Naive thymus-derived CD4-positive, alpha-beta T cell (primary cell): ENCODE measurements at regions of chr7 and their contacts with region 1.

Region 1: GRCh38 chr7:152463709-152464311 is 28.0 kb upstream of the KMT2C start:
- DNase-seq: peak; percentile 99 to 100 (median 100)
- ATAC-seq: peak; percentile 96
- H3K4me3 ChIP-seq: peak overlapping the region; percentile 82
- H3K4me3 Mint-ChIP-seq: peak overlapping the region; percentile 64 to 96 (median 92)
- H3K27ac ChIP-seq: peak overlapping the region; percentile 99
- H3K27ac Mint-ChIP-seq: peak overlapping the region in 7 of 9 donors; percentile 62 to 93 (median 88)
- H3K4me1 ChIP-seq: peaks cover 5% of the 10 kb centered on the region in 2 donors
- H3K4me1 Mint-ChIP-seq: peaks cover 5 to 17% (median 7%) of the 10 kb centered on the region in 7 donors
- H3K27me3 ChIP-seq: no peaks in the 10 kb centered on the region
- H3K27me3 Mint-ChIP-seq: no peaks in the 10 kb centered on the region

Region 2: GRCh38 chr7:151987748-151988529 is 475.9 kb before region 1 on chr7:
- CTCF ChIA-PET with region 1: no interaction called
- POLR2A ChIA-PET with region 1: no interaction called
- intact Hi-C with region 1: no loop called
- DNase-seq: no peak
- ATAC-seq: no peak
- H3K4me3 ChIP-seq: no peak overlapping the region
- H3K4me3 Mint-ChIP-seq: no peak overlapping the region
- H3K27ac ChIP-seq: no peak overlapping the region
- H3K27ac Mint-ChIP-seq: no peak overlapping the region
- H3K4me1 ChIP-seq: no peaks in the 10 kb centered on the region
- H3K4me1 Mint-ChIP-seq: peaks cover 0 to 10% (median 7%) of the 10 kb centered on the region in 7 donors
- H3K27me3 ChIP-seq: no peaks in the 10 kb centered on the region
- H3K27me3 Mint-ChIP-seq: peaks cover 7 to 32% (median 18%) of the 10 kb centered on the region in 5 donors

Region 3: GRCh38 chr7:152512706-152513105 is 48.9 kb after region 1 on chr7:
- CTCF ChIA-PET with region 1: interaction called, 5 read pairs
- POLR2A ChIA-PET with region 1: interaction called, 3 read pairs
- intact Hi-C with region 1: loop called (anchors 1 to 2 kb)
- DNase-seq: peak in 7 of 9 donors; percentile 19 to 54 (median 31)
- ATAC-seq: peak; percentile 79
- H3K4me3 ChIP-seq: peak overlapping the region; percentile 39
- H3K4me3 Mint-ChIP-seq: peak overlapping the region; percentile 58 to 87 (median 78)
- H3K27ac ChIP-seq: peak overlapping the region; percentile 2
- H3K27ac Mint-ChIP-seq: peak overlapping the region in 7 of 9 donors; percentile 15 to 77 (median 51)
- H3K4me1 ChIP-seq: peaks cover 0 to 4% of the 10 kb centered on the region in 2 donors
- H3K4me1 Mint-ChIP-seq: peaks cover 4 to 20% (median 13%) of the 10 kb centered on the region in 7 donors
- H3K27me3 ChIP-seq: no peaks in the 10 kb centered on the region
- H3K27me3 Mint-ChIP-seq: peaks cover 0 to 4% (median 0%) of the 10 kb centered on the region in 5 donors

Region 4: DNA sequence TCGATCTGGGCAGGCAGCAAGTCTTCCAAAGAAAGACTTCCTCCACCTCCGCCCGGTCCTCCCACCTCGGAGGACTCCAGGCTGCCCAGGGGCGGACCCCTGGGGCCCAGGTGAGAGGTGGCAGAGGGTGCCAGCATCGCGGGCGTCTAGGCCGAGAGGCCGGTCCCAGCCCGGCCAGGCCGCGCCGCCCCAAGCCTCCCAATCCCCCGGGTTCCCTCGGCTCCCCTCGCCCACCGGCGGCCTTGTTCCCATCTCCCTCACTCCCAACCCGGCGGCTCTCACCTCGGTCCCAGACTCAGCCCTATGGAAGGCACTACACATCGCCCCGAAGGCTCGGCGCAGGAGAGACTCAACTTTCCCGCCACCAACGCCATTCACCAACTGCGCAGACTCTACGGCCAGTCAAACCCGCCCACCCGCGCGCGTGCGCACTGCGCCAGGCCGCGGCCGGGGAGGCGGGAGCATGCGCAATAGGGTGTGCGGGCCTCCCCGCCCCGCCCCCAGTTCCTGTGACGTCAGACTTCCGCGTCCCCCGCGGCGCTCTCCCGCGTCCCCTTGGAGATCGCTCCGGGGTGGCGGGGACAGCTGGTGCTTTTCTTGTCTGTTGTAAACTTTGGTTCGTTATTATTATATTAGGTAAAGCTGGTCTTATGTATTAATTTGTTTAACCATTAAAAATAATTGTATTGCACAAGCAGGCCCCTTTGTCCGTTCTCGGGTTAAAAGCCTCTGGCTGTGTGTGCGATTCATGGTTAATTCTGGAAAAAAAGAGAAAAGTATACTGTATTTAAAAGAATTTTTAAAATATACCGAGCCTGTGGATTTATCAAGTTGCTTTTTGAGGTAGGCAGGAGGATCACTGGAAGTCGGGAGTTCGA is 212.2 kb after region 1 on chr7 and contains the start of gene XRCC2:
- CTCF ChIA-PET with region 1: no interaction called
- POLR2A ChIA-PET with region 1: interaction called, 6 read pairs
- intact Hi-C with region 1: loop called (anchors 1 kb)
- DNase-seq: peak; percentile 85 to 100 (median 97)
- ATAC-seq: peak; percentile 95
- H3K4me3 ChIP-seq: peak within 1 kb of the TSS; percentile 91
- H3K4me3 Mint-ChIP-seq: peak within 1 kb of the TSS; percentile 88 to 99 (median 94)
- H3K27ac ChIP-seq: peak within 1 kb of the TSS; percentile 87
- H3K27ac Mint-ChIP-seq: peak within 1 kb of the TSS; percentile 75 to 98 (median 91)
- H3K4me1 ChIP-seq: peaks cover 5 to 8% of the 10 kb centered on the region in 2 donors
- H3K4me1 Mint-ChIP-seq: peaks cover 9 to 22% (median 12%) of the 10 kb centered on the region in 7 donors
- H3K27me3 ChIP-seq: no peaks in the 10 kb centered on the region
- H3K27me3 Mint-ChIP-seq: no peaks in the 10 kb centered on the region
- total RNA-seq, gene XRCC2: 0.48 to 13.8 (median 1.2) TPM

Region 5: DNA sequence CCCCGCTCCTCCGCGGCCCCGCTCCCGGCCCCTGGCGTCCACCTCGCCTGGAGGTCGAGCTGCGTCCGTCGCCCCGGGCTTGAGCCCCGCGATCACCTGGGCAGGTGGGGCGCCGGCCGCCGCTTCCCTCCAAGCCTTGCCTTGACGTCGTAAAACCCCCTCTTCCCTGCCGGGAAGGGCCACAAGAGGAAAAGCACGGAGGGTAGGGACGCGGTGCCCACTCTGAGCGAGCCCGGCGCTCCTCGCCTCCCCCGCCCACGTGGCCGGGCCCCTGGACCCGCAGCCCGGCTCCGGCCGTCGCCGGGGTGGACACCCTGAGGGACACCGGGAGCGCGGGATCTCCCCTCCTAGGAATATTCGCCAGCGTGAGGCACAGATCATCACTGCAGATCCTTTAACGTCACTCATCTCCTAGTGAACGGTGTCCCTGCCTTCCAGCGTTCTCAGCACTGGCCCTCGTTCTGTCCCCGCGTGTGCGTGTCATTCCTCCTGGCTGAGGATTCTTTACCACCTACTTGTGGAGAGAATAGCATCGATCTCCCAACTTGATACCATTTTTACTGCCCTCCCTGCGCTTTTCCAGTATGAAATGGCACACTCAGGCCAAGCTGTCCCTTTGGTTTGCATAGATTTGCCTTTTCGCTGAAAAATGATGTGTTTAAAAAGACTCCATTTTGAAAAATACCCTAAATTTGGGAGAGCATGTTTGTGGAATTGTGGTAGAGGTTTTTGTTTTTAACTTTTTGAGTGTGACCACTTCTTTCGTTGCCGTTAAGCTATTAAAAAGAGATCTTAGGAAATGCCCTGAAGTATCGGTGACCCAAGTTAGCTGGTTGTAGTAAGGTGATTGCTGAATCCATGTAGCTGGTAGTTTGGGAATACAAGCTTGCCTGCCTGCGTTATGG is 296.4 kb after region 1 on chr7:
- CTCF ChIA-PET with region 1: no interaction called
- POLR2A ChIA-PET with region 1: no interaction called
- intact Hi-C with region 1: loop called (anchors 1 to 2 kb)
- DNase-seq: peak in 5 of 9 donors; percentile 12 to 53 (median 22)
- ATAC-seq: peak; percentile 26
- H3K4me3 ChIP-seq: peak overlapping the region; percentile 68
- H3K4me3 Mint-ChIP-seq: peak overlapping the region; percentile 85 to 94 (median 90)
- H3K27ac ChIP-seq: peak overlapping the region; percentile 93
- H3K27ac Mint-ChIP-seq: peak overlapping the region; percentile 63 to 97 (median 88)
- H3K4me1 ChIP-seq: peaks cover 6 to 11% of the 10 kb centered on the region in 2 donors
- H3K4me1 Mint-ChIP-seq: peaks cover 9 to 27% (median 20%) of the 10 kb centered on the region in 7 donors
- H3K27me3 ChIP-seq: no peaks in the 10 kb centered on the region
- H3K27me3 Mint-ChIP-seq: peaks cover 0 to 3% (median 0%) of the 10 kb centered on the region in 5 donors